ENCODE measurements at regions of chr9 and their contacts with region 1.

Region 1: DNA sequence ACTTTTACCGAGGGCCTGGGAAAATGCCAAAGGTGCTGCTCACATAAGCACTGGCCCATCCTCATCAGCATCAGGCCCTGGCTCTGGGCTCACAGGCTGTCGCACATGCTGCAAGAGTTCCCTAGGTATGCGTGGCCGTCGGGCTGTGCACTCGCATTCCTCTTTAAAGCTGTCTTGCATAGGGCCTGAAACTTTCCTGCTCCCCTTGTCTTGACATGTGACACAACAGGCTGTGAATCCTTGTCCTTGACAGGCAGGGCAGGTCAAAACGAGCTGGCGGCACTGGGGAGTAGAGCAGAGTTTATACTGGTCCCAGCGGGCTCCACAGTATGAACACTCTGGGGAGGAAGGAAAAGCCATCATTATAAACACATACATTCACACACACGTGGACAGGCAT is 30.7 kb downstream of the TSTD2 start:
- DNase-seq: no peak
- H3K4me3 ChIP-seq: no peak overlapping the region
- H3K4me1 ChIP-seq: no peaks in the 10 kb centered on the region
- H3K27me3 ChIP-seq: no peaks in the 10 kb centered on the region

Region 2: DNA sequence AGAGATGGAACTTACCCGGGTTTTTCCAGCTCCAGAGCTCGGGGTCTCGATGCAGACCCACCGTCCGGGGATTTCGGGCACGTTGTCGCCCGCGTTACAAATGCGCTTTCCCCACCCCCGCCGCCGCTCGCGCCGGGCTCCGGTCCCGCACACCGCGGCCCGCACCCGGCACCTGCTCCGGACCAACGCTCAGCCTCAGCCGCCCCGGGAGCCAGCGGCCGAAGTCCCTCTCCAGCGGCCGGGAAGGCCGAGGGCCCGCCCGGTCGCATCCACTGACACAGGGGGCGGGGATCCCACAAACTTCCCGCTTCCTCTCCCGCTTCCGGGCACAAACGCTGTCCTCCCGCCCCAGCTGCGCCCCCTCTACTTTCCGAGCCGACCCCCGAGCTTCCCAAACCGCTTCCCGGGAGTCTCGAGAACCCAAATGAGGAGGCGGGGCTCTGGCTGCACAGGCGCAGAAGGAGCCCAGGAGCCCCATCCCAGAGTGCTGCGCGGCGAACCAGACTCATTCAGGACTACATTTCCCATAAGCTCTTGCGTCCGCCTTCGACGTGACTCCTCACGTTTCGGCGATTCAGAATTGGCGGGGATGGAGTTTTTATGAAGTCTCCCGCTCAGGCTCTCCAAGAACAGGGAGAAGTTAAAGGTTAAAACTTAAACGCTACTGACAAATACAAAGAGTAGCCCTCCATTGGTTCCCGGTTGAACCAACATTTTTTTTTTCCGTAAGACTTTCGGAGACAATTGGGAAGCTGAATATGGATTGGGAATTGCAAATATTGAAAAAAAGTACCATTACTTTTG is 748.2 kb before region 1 on chr9 and contains the start of gene ZNF782:
- in situ Hi-C with region 1: loop called (anchors 10 kb)
- DNase-seq: peak; percentile 96
- H3K4me3 ChIP-seq: peak within 1 kb of the TSS; percentile 85
- H3K4me1 ChIP-seq: peaks cover 5% of the 10 kb centered on the region; the same call in 1 of the 2 replicates
- H3K27me3 ChIP-seq: no peaks in the 10 kb centered on the region

Region 3: DNA sequence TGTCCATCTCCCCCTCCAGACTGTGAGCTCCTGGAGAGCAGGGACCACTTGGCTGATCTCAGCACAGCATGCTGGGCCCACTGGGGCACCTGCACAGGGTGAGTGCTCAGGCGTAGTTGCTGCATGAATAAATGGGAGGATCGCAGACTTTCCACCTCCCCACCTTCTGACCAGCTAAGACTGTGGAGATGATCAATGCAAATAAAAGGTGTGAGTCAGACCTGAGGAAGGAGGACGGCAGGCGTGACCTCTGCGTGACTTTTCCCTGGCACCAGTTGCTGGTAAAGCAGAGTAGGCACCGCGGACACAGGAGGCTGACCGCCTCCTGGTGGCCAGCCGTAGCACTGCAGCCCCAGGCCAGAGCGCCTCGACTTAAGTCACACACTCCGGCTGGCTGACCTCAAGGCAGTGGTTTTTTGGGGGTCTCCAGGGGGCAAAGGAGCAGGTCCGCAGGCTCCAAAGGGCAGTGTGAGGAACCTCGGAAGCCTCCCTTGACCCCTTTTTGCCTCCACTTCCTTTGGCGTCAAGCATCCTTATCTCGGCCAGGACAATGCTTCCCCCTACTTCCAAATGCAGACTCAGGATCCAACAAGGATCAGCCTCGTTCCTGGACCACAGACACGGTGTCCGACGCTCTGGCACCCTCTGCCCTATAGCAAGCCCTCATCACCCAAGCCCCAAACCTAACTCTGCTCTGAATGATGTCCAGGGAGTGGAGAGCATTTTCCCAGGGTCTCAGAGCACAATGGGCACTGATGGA is 203.3 kb before region 1 on chr9:
- in situ Hi-C with region 1: loop called (anchors 10 kb)
- DNase-seq: peak; percentile 35 to 77
- H3K4me3 ChIP-seq: no peak overlapping the region
- H3K4me1 ChIP-seq: no peaks in the 10 kb centered on the region
- H3K27me3 ChIP-seq: no peaks in the 10 kb centered on the region

Measured in HAP-1 (cell line).